Natural killer cell (primary cell): ENCODE measurements at regions of chr6 and their contacts with region 1.

Region 1: DNA sequence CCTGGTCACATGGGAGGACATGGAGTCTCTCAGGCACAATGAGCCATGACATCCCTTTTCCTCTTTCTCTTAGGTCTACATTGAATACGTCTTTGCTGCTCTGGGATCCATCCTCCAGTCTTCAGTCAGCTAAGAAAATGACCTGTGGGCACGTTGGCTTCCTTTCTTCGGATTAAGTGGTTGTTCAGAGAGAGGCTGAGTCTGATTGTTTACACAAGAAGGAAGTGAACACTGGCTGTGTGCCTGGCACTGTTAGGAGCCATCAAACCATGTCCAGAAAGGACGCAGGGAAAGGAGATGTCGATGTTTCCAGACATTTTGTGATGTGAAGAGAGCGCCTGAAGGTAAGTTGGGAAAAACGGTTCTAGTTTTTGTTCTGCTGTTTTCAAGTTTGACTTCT is 309.9 kb upstream of the CDYL start:
- DNase-seq: no peak
- ATAC-seq: no peak
- H3K4me3 ChIP-seq: no peak overlapping the region
- H3K4me3 Mint-ChIP-seq: no peak overlapping the region
- H3K27ac ChIP-seq: no peak overlapping the region
- H3K27ac Mint-ChIP-seq: no peak overlapping the region
- H3K4me1 ChIP-seq: no peaks in the 10 kb centered on the region
- H3K4me1 Mint-ChIP-seq: no peaks in the 10 kb centered on the region
- H3K27me3 ChIP-seq: no peaks in the 10 kb centered on the region
- H3K27me3 Mint-ChIP-seq: peaks cover 0 to 10% of the 10 kb centered on the region in 2 donors
- CTCF ChIP-seq: no peak

Region 2: GRCh38 chr6:4936681-4937041 is 470.4 kb after region 1 on chr6:
- intact Hi-C with region 1: loop called (anchors 2 kb)
- DNase-seq: peak in 1 of 2 donors; percentile 57
- ATAC-seq: peak in 1 of 3 donors; percentile 55
- H3K4me3 ChIP-seq: no peak overlapping the region
- H3K4me3 Mint-ChIP-seq: no peak overlapping the region
- H3K27ac ChIP-seq: no peak overlapping the region
- H3K27ac Mint-ChIP-seq: peak overlapping the region; percentile 53 to 77
- H3K4me1 ChIP-seq: peaks cover 13% of the 10 kb centered on the region
- H3K4me1 Mint-ChIP-seq: peaks cover 49% of the 10 kb centered on the region in 2 donors
- H3K27me3 ChIP-seq: no peaks in the 10 kb centered on the region
- H3K27me3 Mint-ChIP-seq: no peaks in the 10 kb centered on the region
- CTCF ChIP-seq: peak; percentile 66

Region 3: DNA sequence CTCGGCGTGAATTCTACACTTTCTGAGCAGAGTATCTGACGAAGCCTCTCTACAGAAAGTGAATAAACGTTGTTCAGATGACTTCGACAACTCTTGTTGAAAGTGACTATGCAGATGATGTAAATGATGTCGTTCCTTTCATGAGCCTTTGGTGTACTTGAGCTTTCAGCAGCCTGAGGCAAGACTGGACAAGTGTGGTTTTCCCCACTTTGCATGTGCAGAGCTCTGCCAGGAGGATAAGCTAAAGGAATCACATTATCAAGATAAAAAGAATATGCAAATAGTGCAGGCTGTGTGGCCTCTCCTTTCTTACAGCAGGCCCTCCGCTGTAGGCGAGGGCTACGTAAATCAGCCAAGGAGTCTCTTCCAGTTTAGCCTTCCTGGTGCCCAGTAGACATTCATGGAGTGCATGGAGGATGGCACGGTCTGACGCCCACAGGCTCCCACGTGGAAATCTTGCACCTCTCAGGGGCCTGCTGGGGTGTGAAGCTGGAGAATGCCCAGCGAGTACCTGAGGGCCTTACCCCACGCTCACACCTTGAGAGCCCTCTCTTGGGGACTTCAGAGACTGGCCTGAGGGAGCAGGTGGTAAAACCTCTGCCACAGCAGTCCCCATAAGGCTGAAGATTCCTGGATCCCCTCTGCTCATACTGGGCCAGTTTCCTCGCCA is 482.7 kb after region 1 on chr6:
- intact Hi-C with region 1: no loop called
- DNase-seq: no peak
- ATAC-seq: no peak
- H3K4me3 ChIP-seq: no peak overlapping the region
- H3K4me3 Mint-ChIP-seq: no peak overlapping the region
- H3K27ac ChIP-seq: no peak overlapping the region
- H3K27ac Mint-ChIP-seq: no peak overlapping the region
- H3K4me1 ChIP-seq: no peaks in the 10 kb centered on the region
- H3K4me1 Mint-ChIP-seq: peaks cover 5 to 10% of the 10 kb centered on the region in 2 donors
- H3K27me3 ChIP-seq: no peaks in the 10 kb centered on the region
- H3K27me3 Mint-ChIP-seq: no peaks in the 10 kb centered on the region
- CTCF ChIP-seq: no peak